ENCODE measurements at regions of chr18 and their contacts with region 1.

Region 1: GRCh38 chr18:58195278-58195765 is 151.3 kb downstream of the NEDD4L start:
- DNase-seq: no peak
- ATAC-seq: peak; percentile 86
- H3K4me3 ChIP-seq: peak overlapping the region; percentile 47 to 63
- H3K27ac ChIP-seq: peak overlapping the region; percentile 35
- H3K4me1 ChIP-seq: peaks cover 16 to 38% of the 10 kb centered on the region in 2 experiments
- H3K27me3 ChIP-seq: no peaks in the 10 kb centered on the region
- CTCF ChIP-seq: no peak
- POLR2A ChIP-seq: no peak
- RAD21 ChIP-seq: no peak

Region 2: DNA sequence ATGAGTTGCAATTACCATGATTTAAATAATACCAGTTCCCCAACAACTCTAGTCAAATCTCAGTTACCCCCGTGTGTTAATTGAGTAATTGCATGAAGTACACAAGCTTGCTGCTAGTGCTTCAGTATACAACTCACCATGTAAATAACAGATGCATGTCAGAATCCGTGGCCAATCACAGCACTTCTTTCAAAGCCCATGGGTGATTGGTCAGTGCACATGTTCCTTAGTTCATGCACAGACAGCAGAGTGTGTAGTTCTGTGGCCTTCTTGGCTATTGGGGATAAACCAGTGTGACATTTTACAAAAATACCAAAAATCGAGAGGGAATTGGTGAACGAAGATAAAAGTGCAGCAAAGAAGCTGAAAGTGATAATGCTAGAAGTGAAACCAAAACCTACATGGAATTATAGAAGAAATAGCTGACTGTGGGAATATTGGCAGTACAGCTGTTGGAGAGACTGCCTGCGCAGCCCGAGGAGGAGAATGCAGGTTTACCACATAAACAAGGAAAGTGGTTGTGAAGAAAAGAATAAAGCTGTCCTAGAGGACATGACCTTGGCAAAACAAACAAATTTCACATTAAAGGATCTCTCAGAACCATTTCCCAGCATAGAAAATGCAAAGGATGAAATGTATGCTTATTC is 91.9 kb before region 1 on chr18:
- CTCF ChIA-PET with region 1: no interaction called
- POLR2A ChIA-PET with region 1: no interaction called
- RAD21 ChIA-PET with region 1: no interaction called
- intact Hi-C with region 1: no loop called
- DNase-seq: no peak
- ATAC-seq: no peak
- H3K4me3 ChIP-seq: no peak overlapping the region
- H3K27ac ChIP-seq: no peak overlapping the region
- H3K4me1 ChIP-seq: no peaks in the 10 kb centered on the region
- H3K27me3 ChIP-seq: no peaks in the 10 kb centered on the region
- CTCF ChIP-seq: no peak
- POLR2A ChIP-seq: no peak
- RAD21 ChIP-seq: no peak

Region 3: GRCh38 chr18:58180738-58181353 is 14.5 kb before region 1 on chr18:
- CTCF ChIA-PET with region 1: interaction called, 14 read pairs
- POLR2A ChIA-PET with region 1: no interaction called
- RAD21 ChIA-PET with region 1: no interaction called
- intact Hi-C with region 1: no loop called
- DNase-seq: no peak
- ATAC-seq: peak; percentile 59
- H3K4me3 ChIP-seq: no peak overlapping the region
- H3K27ac ChIP-seq: no peak overlapping the region
- H3K4me1 ChIP-seq: peaks cover 22 to 31% of the 10 kb centered on the region in 2 experiments
- H3K27me3 ChIP-seq: no peaks in the 10 kb centered on the region
- CTCF ChIP-seq: peak; percentile 78 to 96 (median 83)
- POLR2A ChIP-seq: no peak
- RAD21 ChIP-seq: peak; percentile 84

Region 4: DNA sequence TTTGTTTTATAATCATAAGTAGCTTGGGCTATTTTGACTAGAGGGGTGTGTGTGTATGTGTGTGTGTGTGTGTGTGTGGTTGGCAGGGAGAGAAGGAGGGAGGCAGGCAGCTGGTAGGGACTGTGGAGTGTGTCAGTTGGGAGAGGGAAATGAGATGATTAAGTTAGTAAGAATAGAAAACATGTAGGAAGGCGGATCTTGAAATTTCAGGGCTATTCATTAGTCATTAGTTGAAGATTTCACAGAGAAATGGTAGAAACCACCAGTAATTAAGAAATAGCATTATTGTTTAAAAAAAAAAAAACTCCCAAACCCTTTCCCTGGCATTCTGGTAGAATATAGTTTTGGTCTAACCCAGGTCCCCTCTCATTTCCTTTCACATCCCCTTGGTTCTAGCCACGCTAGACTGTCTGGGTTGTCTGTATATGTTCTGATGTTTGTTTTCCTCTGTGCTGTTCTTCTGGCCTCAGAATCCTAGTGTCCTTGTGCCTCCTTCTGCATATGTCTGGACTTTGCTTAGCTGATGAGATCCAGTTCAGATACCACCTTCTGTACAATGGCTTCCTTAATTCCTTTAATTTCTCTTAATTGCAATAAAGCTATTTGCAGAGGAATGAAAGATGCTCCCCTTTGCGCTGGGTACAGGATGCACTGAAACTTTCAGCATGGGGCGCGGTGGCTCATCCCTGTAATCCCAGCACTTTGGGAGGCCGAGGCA is 10.3 kb after region 1 on chr18:
- CTCF ChIA-PET with region 1: no interaction called
- POLR2A ChIA-PET with region 1: no interaction called
- RAD21 ChIA-PET with region 1: no interaction called
- intact Hi-C with region 1: no loop called
- DNase-seq: no peak
- ATAC-seq: no peak
- H3K4me3 ChIP-seq: no peak overlapping the region
- H3K27ac ChIP-seq: no peak overlapping the region
- H3K4me1 ChIP-seq: peaks cover 21 to 28% of the 10 kb centered on the region in 2 experiments
- H3K27me3 ChIP-seq: no peaks in the 10 kb centered on the region
- CTCF ChIP-seq: no peak
- POLR2A ChIP-seq: no peak
- RAD21 ChIP-seq: no peak

Region 5: GRCh38 chr18:58321986-58322385 is 126.7 kb after region 1 on chr18:
- CTCF ChIA-PET with region 1: interaction called, 11 read pairs
- POLR2A ChIA-PET with region 1: no interaction called
- RAD21 ChIA-PET with region 1: interaction called in 1 of 2 experiments, 5 read pairs
- intact Hi-C with region 1: loop called (anchors 1 kb)
- DNase-seq: peak; percentile 74
- ATAC-seq: peak; percentile 97
- H3K4me3 ChIP-seq: no peak overlapping the region
- H3K27ac ChIP-seq: no peak overlapping the region
- H3K4me1 ChIP-seq: peaks cover 13 to 30% of the 10 kb centered on the region in 2 experiments
- H3K27me3 ChIP-seq: no peaks in the 10 kb centered on the region
- CTCF ChIP-seq: peak; percentile 56 to 73 (median 62)
- POLR2A ChIP-seq: no peak
- RAD21 ChIP-seq: peak; percentile 94

Region 6: GRCh38 chr18:58493516-58494253 is 298.4 kb after region 1 on chr18:
- CTCF ChIA-PET with region 1: interaction called, 3 read pairs
- POLR2A ChIA-PET with region 1: no interaction called
- RAD21 ChIA-PET with region 1: no interaction called
- intact Hi-C with region 1: loop called (anchors 10 kb)
- DNase-seq: peak; percentile 56
- ATAC-seq: peak; percentile 94
- H3K4me3 ChIP-seq: no peak overlapping the region
- H3K27ac ChIP-seq: no peak overlapping the region
- H3K4me1 ChIP-seq: peaks cover 0 to 4% of the 10 kb centered on the region in 2 experiments; a peak in 2 of 4 replicates
- H3K27me3 ChIP-seq: peaks cover 6% of the 10 kb centered on the region; the same call in 1 of the 2 replicates
- CTCF ChIP-seq: peak; percentile 77 to 93 (median 81)
- POLR2A ChIP-seq: no peak
- RAD21 ChIP-seq: peak; percentile 86